ENCODE measurements at regions of chr14 and their contacts with region 1.

Region 1: GRCh38 chr14:70563869-70564268 is 29.1 kb upstream of the ADAM20 start:
- DNase-seq: no peak
- ATAC-seq: no peak
- H3K4me3 ChIP-seq: no peak overlapping the region
- H3K4me3 Mint-ChIP-seq: no peak overlapping the region
- H3K27ac ChIP-seq: no peak overlapping the region
- H3K27ac Mint-ChIP-seq: no peak overlapping the region
- H3K4me1 ChIP-seq: no peaks in the 10 kb centered on the region
- H3K4me1 Mint-ChIP-seq: peaks cover 0 to 2% (median 0%) of the 10 kb centered on the region in 3 donors
- H3K27me3 ChIP-seq: no peaks in the 10 kb centered on the region
- H3K27me3 Mint-ChIP-seq: no peaks in the 10 kb centered on the region

Region 2: DNA sequence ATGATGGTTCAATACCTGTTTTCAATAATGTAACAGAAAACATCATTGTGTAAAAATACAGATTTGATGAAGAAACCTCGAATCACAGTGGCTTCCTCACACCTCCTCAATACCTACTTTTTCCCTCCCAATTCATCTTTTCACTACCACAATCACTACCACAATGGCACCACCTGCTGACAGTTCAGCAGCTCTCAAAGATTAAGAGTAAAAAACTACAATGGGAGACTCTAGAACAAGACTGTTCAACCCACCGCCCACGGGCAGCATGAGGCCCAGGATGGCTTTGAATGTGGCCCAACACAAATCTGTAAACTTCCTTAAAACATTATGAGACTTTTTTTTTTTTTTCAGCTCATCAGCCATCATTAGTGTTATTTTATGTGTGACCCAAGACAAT is 21.4 kb after region 1 on chr14:
- CTCF ChIA-PET with region 1: no interaction called
- POLR2A ChIA-PET with region 1: interaction called in 1 of 2 experiments, 13 read pairs
- DNase-seq: no peak
- ATAC-seq: no peak
- H3K4me3 ChIP-seq: no peak overlapping the region
- H3K4me3 Mint-ChIP-seq: no peak overlapping the region
- H3K27ac ChIP-seq: no peak overlapping the region
- H3K27ac Mint-ChIP-seq: no peak overlapping the region
- H3K4me1 ChIP-seq: no peaks in the 10 kb centered on the region
- H3K4me1 Mint-ChIP-seq: peaks cover 0 to 2% (median 0%) of the 10 kb centered on the region in 3 donors
- H3K27me3 ChIP-seq: no peaks in the 10 kb centered on the region
- H3K27me3 Mint-ChIP-seq: no peaks in the 10 kb centered on the region